Ascending aorta (tissue), 2 donors: ENCODE measurements at regions of chr6 and their contacts with region 1.

Region 1: DNA sequence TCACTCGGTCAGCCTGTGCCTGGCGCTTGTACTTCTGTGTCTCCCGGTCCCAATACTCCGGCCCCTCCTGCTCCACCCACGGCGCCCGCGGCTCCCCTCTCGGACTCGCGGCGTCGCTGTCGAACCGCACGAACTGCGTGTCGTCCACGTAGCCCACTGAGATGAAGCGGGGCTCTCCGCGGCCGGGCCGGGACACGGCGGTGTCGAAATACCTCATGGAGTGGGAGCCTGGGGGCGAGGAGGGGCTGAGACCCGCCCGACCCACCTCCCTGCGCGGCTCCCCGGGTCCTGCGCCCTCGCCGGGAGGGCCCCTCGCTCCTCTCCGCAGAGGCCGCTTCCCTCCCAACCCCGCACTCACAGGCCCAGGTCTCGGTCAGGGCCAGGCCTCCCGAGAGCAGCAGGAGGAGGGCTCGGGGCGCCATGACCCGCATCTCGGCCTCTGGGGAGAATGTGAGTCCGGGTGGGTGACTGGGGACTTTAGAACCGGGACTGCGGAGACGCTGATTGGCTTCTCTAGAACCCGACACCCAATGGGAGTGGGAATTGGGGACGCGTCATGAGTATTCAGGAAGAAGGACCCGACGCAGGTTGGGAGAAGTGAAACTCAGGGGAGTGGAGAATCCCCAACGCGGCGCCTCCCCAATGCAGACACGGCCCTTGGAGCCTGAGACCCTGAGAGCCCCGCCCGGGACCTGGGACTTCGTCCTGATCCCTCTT is at the start of gene HLA-C:
- DNase-seq: peak; percentile 80 to 97
- H3K4me3 ChIP-seq: peak within 1 kb of the TSS; percentile 68 to 71
- H3K27ac ChIP-seq: peak within 1 kb of the TSS; percentile 83 to 99
- H3K4me1 ChIP-seq: peaks cover 0 to 2% of the 10 kb centered on the region in 2 donors
- H3K27me3 ChIP-seq: no peaks in the 10 kb centered on the region
- CTCF ChIP-seq: no peak
- total RNA-seq, gene HLA-C: 921 TPM

Region 2: GRCh38 chr6:30326526-30327260 is 945.1 kb before region 1 on chr6 and contains the start of gene TRIM39:
- intact Hi-C with region 1: loop called (anchors 5 kb)
- DNase-seq: peak; percentile 47 to 93
- H3K4me3 ChIP-seq: peak within 1 kb of the TSS; percentile 76 to 95
- H3K27ac ChIP-seq: peak within 1 kb of the TSS; percentile 97 to 99
- H3K4me1 ChIP-seq: peaks cover 0 to 20% of the 10 kb centered on the region in 2 donors
- H3K27me3 ChIP-seq: no peaks in the 10 kb centered on the region
- CTCF ChIP-seq: no peak
- total RNA-seq, gene TRIM39: 2.8 TPM

Region 3: DNA sequence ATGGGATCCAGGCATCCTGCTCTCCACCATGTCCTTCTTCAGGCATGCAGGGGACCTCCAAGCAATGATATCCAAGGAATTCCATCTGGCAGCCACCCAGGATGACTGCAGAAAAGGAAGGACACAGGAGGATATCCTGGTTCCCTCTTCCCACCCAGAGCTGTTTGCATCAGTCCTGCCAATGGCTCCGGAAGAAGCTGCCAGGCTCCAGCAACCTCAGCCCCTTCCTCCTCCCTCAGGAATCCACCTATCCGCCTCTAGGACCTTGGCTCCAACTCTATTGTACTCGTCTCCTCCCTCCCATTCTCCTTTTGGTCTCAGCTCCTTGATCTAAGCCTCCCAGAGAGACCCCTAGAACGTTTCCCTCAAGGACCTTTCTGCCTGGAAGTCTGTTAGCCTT is 132.2 kb before region 1 on chr6:
- intact Hi-C with region 1: loop called (anchors 5 kb)
- DNase-seq: no peak
- H3K4me3 ChIP-seq: no peak overlapping the region
- H3K27ac ChIP-seq: no peak overlapping the region
- H3K4me1 ChIP-seq: peaks cover 0 to 4% of the 10 kb centered on the region in 2 donors
- H3K27me3 ChIP-seq: no peaks in the 10 kb centered on the region
- CTCF ChIP-seq: no peak

Region 4: GRCh38 chr6:31158140-31158862 is 113.5 kb before region 1 on chr6 and contains the start of gene TCF19:
- intact Hi-C with region 1: loop called (anchors 1 kb)
- DNase-seq: peak; percentile 96 to 100
- H3K4me3 ChIP-seq: peak within 1 kb of the TSS; percentile 70 to 86
- H3K27ac ChIP-seq: peak within 1 kb of the TSS; percentile 53 to 70
- H3K4me1 ChIP-seq: peaks cover 0 to 17% of the 10 kb centered on the region in 2 donors
- H3K27me3 ChIP-seq: no peaks in the 10 kb centered on the region
- CTCF ChIP-seq: no peak
- total RNA-seq, gene TCF19: 10.3 TPM

Region 5: DNA sequence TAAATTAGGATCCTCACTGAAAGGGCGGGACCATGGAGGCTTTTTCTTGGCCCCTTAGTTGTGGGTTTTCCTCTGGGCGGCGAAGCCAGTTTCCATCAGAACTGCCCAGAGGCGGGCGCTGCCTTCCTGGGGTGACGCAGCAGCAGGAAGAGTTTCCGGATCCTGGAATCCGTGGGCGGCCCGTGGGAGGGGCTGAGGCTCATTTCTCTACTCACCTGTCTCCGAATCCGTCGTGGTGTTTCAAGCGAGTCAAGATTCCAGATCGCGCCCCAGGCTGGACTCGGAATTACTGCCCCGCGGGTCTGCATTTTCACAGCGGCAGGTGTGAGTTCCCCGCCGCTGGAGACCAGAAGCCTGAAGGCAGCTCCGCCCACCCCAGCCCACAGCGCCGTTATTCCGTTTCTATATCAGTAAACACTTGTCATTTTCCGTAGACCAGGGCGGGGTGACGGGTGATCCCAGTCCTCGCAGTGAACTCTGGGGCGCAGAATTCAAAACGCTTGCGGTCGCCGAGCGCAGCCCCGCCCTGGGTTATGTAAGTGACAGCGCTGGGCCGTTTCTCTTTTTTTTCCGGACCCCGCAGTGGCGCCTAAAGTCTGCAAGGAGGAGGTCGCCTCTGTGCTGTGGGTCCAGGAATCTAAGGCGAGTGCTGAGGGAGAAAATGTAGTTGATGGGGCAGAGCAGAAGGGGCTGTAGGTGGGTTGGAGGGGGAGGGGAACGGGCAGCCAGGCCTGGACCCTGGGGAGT is 74.1 kb before region 1 on chr6:
- intact Hi-C with region 1: loop called (anchors 1 kb)
- DNase-seq: peak; percentile 75 to 96
- H3K4me3 ChIP-seq: peak overlapping the region; percentile 73 to 81
- H3K27ac ChIP-seq: peak overlapping the region; percentile 95 to 97
- H3K4me1 ChIP-seq: peaks cover 0 to 11% of the 10 kb centered on the region in 2 donors
- H3K27me3 ChIP-seq: no peaks in the 10 kb centered on the region
- CTCF ChIP-seq: no peak

Region 6: DNA sequence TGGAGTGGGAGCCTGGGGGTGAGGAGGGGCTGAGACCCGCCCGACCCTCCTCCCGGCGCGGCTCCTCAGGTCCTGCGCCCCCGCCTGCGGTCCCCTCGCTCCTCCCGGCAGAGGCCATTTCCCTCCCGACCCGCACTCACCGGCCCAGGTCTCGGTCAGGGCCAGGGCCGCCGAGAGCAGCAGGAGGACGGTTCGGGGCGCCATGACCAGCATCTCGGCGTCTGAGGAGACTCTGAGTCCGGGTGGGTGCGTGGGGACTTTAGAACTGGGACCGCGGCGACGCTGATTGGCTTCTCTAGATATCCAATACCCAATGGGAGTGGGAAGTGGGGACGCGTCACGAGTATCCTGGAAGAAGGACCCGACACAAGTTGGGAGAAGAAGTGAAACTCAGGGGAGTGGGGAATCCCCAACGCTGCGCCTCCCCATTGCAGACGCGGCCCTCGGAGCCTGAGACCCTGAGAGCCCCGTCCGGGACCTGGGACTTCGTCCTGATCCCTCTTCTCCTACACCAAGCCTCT is 85.2 kb after region 1 on chr6 and contains the start of gene HLA-B:
- intact Hi-C with region 1: loop called (anchors 2 kb)
- DNase-seq: peak in 1 of 2 donors; percentile 87
- H3K4me3 ChIP-seq: peak within 1 kb of the TSS; percentile 61 to 91
- H3K27ac ChIP-seq: peak within 1 kb of the TSS; percentile 76 to 84
- H3K4me1 ChIP-seq: peaks cover 0 to 5% of the 10 kb centered on the region in 2 donors
- H3K27me3 ChIP-seq: no peaks in the 10 kb centered on the region
- CTCF ChIP-seq: no peak
- total RNA-seq, gene HLA-B: 1,833 TPM